Activated T-helper 1 cell treated with anti-CD3 and anti-CD28 coated beads, Interleukin-12 subunit alpha, Interleukin-12 subunit beta, Interleukin-2, Interleukin-4 antibody, amounts not matched to agents 30 ng/mL and 10 ng/mL and 1 ng/mL, durations not matched to agents 14 hours and 24 hours and 36 hours (primary cell): ENCODE measurements at regions of chr2 and their contacts with region 1.

Region 1: DNA sequence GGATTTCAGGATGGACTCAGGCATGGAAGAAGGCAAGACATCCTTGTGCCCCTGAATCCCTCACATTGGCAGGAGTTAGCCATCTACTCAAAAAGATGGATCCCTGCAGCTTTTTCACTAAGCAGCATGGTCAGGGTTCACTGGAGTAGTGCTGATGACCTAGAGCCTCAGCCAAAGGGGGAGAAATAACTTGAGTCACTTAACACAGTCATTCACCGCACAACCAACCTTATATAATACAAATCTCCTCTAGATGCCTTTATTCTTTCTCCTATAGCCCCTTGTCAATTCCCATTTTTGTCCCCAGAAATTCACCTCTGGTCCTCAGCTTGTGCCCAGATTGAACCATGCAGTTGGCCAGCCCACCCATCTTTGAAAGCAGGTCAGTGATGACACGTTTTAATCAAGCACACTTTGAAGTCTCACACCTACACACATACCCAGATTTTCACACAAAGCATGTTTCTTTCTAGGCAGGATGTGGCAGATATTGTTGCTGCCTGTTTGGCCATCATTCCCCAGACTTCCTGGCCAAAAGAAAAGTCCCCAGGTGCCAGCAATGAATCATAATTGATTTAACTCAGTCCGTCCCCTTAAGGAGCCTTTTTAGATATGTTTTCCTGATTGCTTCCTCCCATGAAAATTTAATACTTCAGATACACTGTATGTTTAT is 84.2 kb downstream of the LBH start:
- DNase-seq: peak; percentile 11
- H3K4me3 Mint-ChIP-seq: peak overlapping the region; percentile 58
- H3K27ac Mint-ChIP-seq: peak overlapping the region; percentile 94
- H3K4me1 Mint-ChIP-seq: peaks cover 44% of the 10 kb centered on the region
- H3K27me3 Mint-ChIP-seq: no peaks in the 10 kb centered on the region

Region 2: DNA sequence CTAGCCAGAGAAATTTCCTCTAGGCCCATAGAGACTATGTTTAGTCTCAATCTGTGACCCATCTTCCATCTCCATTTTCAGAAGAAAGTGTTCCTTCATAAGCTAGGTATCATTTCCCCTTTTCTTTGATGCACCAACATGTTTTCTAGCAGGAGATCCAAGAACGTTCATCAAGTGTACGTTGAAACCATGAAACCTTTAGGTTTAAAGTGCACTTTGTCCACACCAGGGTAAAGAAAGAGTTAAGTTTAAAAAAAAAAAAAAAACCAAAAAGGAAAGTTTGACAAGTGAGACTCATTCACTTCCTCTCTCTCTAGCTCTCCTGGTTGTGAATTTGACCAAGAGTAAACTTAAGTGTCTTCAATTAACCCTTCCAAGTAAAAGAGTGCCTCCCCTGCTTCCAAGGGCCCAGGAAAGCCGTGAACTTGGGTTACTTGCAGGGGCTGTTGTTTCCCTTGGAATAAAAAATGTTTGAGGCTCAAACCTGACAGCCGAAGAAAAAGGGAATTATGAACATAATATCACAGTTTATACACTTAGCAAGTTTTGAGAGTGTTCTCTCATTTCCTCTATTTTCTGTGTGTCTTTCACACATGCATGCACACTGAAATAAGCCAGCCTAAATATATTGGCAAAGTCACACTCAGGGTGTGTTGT is 27.5 kb before region 1 on chr2:
- intact Hi-C with region 1: loop called (anchors 1 kb)
- DNase-seq: no peak
- H3K4me3 Mint-ChIP-seq: peak overlapping the region; percentile 57
- H3K27ac Mint-ChIP-seq: peak overlapping the region; percentile 83
- H3K4me1 Mint-ChIP-seq: peaks cover 31% of the 10 kb centered on the region
- H3K27me3 Mint-ChIP-seq: peaks cover 2% of the 10 kb centered on the region